ENCODE measurements at regions of chr20 and their contacts with region 1.

Region 1: DNA sequence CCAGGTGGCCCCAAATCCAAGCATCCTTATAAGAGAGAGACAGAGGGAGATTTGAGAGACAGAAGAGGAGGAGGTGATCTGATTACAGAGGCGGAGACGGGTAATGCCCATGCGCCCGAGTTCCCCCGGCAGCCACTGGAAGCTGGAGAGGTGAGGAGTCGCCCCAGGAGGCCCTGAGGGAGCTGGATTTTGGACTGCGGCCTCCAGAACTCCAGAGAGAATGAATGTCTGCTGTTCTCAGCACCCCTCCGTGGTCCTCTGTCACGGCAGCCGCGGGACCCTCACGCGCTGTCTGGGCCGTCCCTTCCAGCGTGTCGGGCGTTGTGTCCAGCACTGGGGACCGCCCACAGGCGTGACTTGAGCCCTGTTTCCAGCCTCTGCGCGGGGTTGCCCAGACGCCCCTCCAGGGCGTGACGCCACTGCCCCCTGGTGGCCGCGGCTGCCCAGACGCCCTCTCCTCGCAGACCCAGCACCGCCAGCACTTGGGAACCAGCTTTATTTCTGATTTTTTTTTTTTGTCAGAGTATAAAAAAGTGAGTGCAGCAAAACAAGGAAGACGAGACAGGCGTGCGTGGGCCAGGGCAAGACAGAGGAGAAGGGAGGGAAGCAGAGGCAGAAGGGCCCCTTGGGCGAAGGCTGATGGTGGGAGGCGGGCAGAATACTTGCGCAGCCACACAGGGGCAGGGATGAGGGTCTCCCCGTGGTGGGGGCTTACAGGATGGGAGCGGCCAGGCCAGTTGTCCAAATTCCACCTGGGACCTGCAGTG is 4.1 kb upstream of the ZNF512B start:
- H3K4me3 Mint-ChIP-seq: no peak overlapping the region
- H3K27ac Mint-ChIP-seq: peak overlapping the region; percentile 38
- H3K4me1 Mint-ChIP-seq: peaks cover 43% of the 10 kb centered on the region
- H3K27me3 Mint-ChIP-seq: peaks cover 30% of the 10 kb centered on the region

Region 2: DNA sequence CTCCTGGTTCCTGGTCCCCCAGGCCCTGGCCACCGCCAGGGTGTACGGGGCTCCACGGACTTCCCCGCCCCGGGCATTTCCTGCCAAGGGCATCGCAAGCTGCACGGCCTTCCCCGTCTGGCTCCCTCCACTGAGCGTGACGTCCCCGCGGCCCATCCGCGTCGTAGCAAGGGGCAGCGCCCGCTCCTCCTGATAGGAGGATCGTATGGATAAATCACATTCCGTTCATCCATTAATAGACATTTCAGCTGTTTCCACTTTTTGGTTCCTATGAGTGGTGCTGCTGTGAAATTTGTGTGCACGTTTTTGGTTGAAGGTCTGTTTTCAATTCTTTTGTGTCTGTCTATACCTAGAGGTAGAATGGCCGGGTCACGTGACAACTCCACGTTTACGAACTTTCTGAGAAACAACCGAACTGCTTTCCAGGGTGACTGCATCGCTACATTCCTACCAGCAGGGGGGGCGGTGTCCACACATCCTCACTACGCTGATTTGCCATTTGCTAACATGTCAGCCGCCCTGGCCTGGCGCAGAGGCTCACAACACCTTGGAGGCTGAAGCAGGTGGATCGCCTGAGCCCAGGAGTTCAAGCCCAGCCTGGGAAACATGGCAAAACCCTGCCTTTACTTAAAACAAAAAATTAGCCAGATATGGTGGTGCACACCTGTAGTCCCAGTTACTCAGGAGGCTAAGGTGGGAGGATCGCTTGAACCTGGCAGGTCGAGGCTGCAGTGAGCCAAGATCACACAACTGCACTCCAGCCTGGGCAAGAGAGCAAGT is 539.0 kb before region 1 on chr20:
- intact Hi-C with region 1: loop called (anchors 5 kb)
- H3K4me3 Mint-ChIP-seq: no peak overlapping the region
- H3K27ac Mint-ChIP-seq: no peak overlapping the region
- H3K4me1 Mint-ChIP-seq: peaks cover 7% of the 10 kb centered on the region
- H3K27me3 Mint-ChIP-seq: peaks cover 23% of the 10 kb centered on the region

Region 3: DNA sequence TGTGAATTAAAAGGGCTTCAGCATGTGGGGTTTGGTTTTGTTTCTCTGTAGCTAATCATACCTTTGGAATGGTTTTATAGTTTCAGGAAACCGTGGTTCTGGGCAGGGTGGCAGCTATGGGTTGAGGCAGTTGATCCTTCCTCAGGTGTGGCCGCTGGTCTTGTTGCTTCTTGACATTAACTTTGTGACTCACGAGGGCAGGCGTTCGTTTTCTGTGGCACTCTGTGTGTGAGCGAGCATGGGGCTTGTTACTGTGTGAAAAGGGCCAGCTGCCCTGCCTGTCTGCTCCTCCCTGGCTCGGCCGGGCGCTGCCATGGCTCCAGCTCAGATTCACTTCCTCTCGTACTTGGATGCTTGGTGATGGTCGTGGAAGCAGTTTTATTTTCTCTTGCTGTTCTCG is 62.6 kb before region 1 on chr20:
- intact Hi-C with region 1: loop called (anchors 5 kb)
- H3K4me3 Mint-ChIP-seq: peak overlapping the region; percentile 32
- H3K27ac Mint-ChIP-seq: peak overlapping the region; percentile 71
- H3K4me1 Mint-ChIP-seq: peaks cover 69% of the 10 kb centered on the region
- H3K27me3 Mint-ChIP-seq: no peaks in the 10 kb centered on the region

Measured in dendritic cell treated with granulocyte-macrophage colony-stimulating factor and Interleukin-4, amounts not matched to agents 40 ng/mL and 50 ng/mL, for 4 days (primary cell).